Lower leg skin (tissue), 4 donors: ENCODE measurements at regions of chr18 and their contacts with region 1.

Region 1: DNA sequence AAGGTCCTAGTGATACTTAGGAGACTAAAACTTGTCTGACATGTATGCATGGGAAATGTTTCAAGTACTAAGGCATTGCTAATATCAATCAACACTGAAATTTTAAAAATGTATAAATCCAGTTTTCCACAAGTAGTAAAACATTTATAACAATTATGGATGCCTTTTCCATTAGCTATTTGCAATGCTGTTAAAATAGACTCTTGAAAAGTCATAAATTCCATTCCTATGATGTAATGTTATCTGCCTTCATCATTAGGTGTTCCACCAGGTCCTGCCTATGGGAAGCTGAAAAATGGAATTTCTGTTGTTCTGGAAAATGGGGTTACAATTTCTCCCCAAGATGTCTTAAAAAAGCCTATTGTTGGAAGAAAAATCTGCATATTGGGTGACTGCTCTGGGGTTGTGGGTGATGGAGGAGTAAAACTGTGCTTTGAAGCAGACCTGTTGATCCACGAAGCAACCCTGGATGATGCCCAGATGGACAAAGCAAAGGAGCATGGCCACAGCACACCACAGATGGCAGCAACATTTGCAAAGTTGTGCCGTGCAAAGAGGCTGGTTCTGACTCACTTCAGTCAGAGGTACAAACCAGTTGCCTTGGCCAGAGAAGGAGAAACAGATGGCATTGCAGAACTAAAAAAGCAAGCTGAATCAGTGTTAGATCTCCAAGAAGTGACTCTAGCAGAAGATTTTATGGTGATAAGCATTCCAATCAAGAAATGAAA is 18.7 kb downstream of the ELAC1 start:
- DNase-seq: no peak
- H3K4me3 ChIP-seq: no peak overlapping the region
- CTCF ChIP-seq: no peak
- POLR2A ChIP-seq: no peak

Region 2: GRCh38 chr18:49697757-49698524 is 1288.6 kb before region 1 on chr18:
- intact Hi-C with region 1: loop called (anchors 5 kb)
- DNase-seq: peak in 1 of 2 donors; percentile 82
- H3K4me3 ChIP-seq: no peak overlapping the region
- CTCF ChIP-seq: no peak
- POLR2A ChIP-seq: no peak